ENCODE measurements at regions of chr15 and their contacts with region 1.

Region 1: DNA sequence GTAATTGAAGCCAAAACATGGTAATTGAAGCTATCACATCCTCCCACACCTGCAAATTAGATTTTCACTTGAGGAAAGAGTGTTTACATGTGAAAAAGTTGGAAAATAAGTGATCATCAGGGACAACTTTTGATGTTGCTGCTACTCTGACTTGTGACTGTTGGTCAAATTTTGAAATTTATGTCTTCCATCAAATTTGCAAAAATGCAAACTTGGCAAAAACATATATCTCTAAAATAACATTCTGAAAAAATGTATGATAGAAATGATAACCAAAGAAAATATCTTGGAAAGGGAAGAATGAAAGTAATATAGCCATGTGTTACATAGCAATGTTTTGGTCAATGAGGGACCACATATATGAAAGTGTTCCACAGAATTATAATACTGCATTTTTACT is 703.9 kb upstream of the SEMA6D start:
- DNase-seq: no peak
- H3K4me3 ChIP-seq: no peak overlapping the region
- H3K27ac ChIP-seq: no peak overlapping the region
- H3K4me1 ChIP-seq: no peaks in the 10 kb centered on the region
- H3K27me3 ChIP-seq: no peaks in the 10 kb centered on the region
- CTCF ChIP-seq: no peak
- POLR2A ChIP-seq: no peak

Region 2: GRCh38 chr15:47041301-47041700 is 27.9 kb after region 1 on chr15:
- intact Hi-C with region 1: loop called (anchors 2 kb)
- DNase-seq: no peak
- H3K4me3 ChIP-seq: no peak overlapping the region
- H3K27ac ChIP-seq: no peak overlapping the region
- H3K4me1 ChIP-seq: no peaks in the 10 kb centered on the region
- H3K27me3 ChIP-seq: no peaks in the 10 kb centered on the region
- CTCF ChIP-seq: no peak
- POLR2A ChIP-seq: no peak

Region 3: GRCh38 chr15:47897525-47897924 is 884.1 kb after region 1 on chr15:
- intact Hi-C with region 1: no loop called
- DNase-seq: no peak
- H3K4me3 ChIP-seq: no peak overlapping the region
- H3K27ac ChIP-seq: no peak overlapping the region
- H3K4me1 ChIP-seq: no peaks in the 10 kb centered on the region
- H3K27me3 ChIP-seq: no peaks in the 10 kb centered on the region
- CTCF ChIP-seq: no peak
- POLR2A ChIP-seq: no peak